ENCODE measurements at regions of chr11 and their contacts with region 1.

Region 1: GRCh38 chr11:65540297-65541092 is 15.6 kb downstream of the SCYL1 start:
- DNase-seq: peak; percentile 90
- H3K4me3 ChIP-seq: peak overlapping the region in 1 of 3 experiments; percentile 38
- H3K27ac ChIP-seq: no peak overlapping the region
- H3K4me1 ChIP-seq: peaks cover 6% of the 10 kb centered on the region
- H3K27me3 ChIP-seq: no peaks in the 10 kb centered on the region
- CTCF ChIP-seq: peak; percentile 85 to 91
- POLR2A ChIP-seq: no peak

Region 2: GRCh38 chr11:65524741-65525545 is 15.6 kb before region 1 on chr11 and contains the start of gene SCYL1:
- CTCF ChIA-PET with region 1: interaction called, 6 read pairs
- POLR2A ChIA-PET with region 1: no interaction called
- dilution Hi-C with region 1: no loop called
- intact Hi-C with region 1: loop called (anchors 1 kb)
- DNase-seq: peak; percentile 66
- H3K4me3 ChIP-seq: peak within 1 kb of the TSS; percentile 39 to 99 (median 54)
- H3K27ac ChIP-seq: peak within 1 kb of the TSS; percentile 60
- H3K4me1 ChIP-seq: peaks cover 11% of the 10 kb centered on the region
- H3K27me3 ChIP-seq: no peaks in the 10 kb centered on the region
- CTCF ChIP-seq: no peak
- POLR2A ChIP-seq: peak; percentile 60
- total RNA-seq, gene SCYL1: 88.2 and 88.7 TPM in 2 replicates

Region 3: GRCh38 chr11:65551572-65552398 is 11.3 kb after region 1 on chr11:
- CTCF ChIA-PET with region 1: interaction called, 21 read pairs
- POLR2A ChIA-PET with region 1: interaction called, 3 read pairs
- dilution Hi-C with region 1: no loop called
- intact Hi-C with region 1: no loop called
- DNase-seq: peak; percentile 44
- H3K4me3 ChIP-seq: no peak overlapping the region
- H3K27ac ChIP-seq: no peak overlapping the region
- H3K4me1 ChIP-seq: peaks cover 20% of the 10 kb centered on the region
- H3K27me3 ChIP-seq: no peaks in the 10 kb centered on the region
- CTCF ChIP-seq: peak; percentile 55 to 57
- POLR2A ChIP-seq: no peak

Region 4: DNA sequence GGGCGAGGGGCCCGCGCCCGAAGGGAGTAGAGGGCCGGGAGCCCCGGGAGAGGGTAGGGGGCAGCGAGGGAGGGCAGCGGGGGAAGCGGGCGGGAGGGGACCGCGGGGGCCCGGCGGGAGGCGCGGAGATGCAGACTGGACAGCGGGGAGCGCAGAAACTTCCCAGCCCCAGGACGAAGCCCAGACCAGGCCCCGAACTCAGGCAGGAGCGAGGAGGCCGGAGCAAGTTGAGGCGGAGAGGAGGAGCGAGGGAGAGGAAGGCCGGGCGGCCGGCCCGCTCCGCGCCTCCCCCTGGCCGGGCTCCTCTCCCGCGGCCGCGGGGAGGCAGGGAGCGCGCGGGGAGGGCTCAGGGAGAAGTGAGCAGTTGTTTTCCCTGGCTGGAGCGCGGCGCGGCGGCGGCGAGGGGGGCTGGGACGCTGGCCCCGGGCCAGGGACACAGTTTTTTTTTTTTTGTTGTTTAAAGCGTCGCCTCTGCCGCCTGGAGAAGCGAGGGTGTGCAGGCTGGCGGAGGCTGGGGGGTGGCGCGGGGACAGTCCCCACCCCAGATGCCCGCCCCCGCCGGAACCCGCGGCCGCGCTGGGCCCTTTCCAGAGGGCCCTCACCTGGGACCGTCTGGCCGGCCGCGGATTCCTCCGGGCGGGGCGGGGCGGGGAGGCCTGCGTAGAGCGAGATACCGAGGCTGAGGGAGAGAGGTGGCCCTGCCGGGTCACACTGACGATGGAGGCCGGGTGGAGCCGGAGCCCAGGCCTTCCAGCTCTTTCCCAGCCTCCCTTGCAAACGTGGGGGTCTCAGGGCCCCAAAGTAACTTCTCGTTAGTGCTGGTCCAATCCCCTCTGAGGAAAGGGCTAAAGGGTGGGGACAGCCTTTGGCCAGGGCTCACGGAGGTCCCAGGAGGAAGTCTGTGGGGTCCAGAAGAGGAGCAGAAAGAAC is 17.8 kb after region 1 on chr11 and contains the start of gene LTBP3:
- CTCF ChIA-PET with region 1: interaction called, 54 read pairs
- POLR2A ChIA-PET with region 1: interaction called, 3 read pairs
- dilution Hi-C with region 1: no loop called
- intact Hi-C with region 1: loop called (anchors 1 kb)
- DNase-seq: peak; percentile 84
- H3K4me3 ChIP-seq: peak within 1 kb of the TSS; percentile 25 to 52 (median 48)
- H3K27ac ChIP-seq: peak within 1 kb of the TSS; percentile 78
- H3K4me1 ChIP-seq: peaks cover 60% of the 10 kb centered on the region
- H3K27me3 ChIP-seq: no peaks in the 10 kb centered on the region
- CTCF ChIP-seq: no peak
- POLR2A ChIP-seq: peak; percentile 62
- total RNA-seq, gene LTBP3: 120 and 121 TPM in 2 replicates

Region 5: DNA sequence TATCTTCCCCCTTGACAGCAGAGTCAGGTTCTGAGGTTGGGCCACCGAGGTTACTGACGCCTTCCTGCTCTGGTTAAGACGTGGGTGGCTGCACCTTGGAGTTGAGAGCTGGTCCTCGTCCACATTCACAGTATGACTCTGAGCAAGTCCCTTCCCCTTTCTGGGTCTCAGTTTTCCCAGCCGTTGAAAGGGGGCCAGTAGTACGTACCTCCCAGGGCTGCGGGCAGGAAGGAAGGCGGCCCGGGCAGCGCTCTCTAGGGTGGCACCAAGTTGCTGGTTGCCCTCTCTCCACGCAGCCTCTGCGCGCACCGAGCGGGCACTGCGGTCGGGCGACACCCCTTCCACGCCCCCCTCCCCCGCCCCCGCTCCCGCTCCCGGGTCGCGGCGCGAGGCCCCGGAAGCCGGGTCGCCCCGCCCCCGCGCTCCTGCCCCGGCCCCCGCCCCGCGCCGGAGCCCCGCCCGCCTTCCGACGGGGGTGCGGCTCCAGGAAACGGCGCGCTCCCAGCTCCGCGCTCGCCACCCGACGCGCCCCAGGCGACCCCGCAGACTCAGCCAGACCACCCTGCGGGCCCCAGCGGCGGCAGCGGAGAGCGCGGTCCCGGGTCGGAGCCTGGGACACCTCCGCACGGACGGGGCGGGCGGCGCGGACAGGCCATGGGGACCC is 35.2 kb after region 1 on chr11 and contains the start of gene EHBP1L1:
- CTCF ChIA-PET with region 1: interaction called, 146 read pairs
- POLR2A ChIA-PET with region 1: no interaction called
- dilution Hi-C with region 1: no loop called
- intact Hi-C with region 1: loop called (anchors 1 kb)
- DNase-seq: peak; percentile 32
- H3K4me3 ChIP-seq: peak within 1 kb of the TSS; percentile 16 to 34 (median 31)
- H3K27ac ChIP-seq: peak within 1 kb of the TSS; percentile 45
- H3K4me1 ChIP-seq: peaks cover 50% of the 10 kb centered on the region
- H3K27me3 ChIP-seq: no peaks in the 10 kb centered on the region
- CTCF ChIP-seq: no peak
- POLR2A ChIP-seq: no peak
- total RNA-seq, gene EHBP1L1: 18.8 and 19.7 TPM in 2 replicates

Region 6: DNA sequence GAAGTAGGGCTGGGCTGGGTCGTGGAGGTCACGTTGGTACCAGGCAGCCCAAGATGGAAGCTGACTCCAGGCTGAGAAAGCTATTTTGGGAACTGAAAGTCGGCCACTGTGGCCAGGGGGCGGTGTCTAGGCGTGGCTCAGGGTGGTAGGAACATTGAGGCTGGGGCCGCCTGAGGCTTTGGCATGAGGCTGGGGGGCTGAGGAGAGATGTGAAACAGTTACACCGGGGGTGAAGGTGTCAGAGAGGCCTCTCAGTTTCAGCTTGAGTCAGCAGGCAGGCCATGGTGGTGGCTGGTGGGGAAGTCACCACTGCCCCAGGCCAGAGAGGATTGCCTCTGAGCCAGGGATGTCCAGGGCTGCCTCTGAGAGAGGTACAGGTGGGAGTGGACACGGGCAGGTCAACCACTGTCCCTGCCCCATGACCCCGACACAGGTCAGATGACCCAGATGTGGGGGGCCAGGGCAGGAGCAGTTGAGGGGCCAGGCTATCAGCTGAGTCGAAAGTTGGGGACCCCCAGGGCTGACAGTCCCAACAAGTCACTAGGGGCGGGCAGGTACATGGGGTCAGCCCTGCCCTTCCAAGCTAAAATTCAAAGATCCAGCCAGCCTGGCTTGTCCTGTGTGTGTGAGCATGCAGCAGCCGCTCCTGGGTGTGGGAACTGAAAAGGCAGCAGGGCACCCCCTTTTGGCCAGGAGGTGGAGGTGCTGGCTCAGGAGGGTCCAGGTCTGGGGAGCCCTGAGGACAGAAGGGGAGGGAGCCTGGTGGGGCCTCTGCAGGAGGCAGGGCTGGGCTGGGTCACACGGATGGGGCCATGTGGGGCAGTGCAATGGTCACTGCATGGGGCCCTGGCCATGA is 47.9 kb after region 1 on chr11:
- CTCF ChIA-PET with region 1: interaction called, 206 read pairs
- POLR2A ChIA-PET with region 1: interaction called, 3 read pairs
- dilution Hi-C with region 1: no loop called
- intact Hi-C with region 1: loop called (anchors 1 kb)
- DNase-seq: peak; percentile 54
- H3K4me3 ChIP-seq: no peak overlapping the region
- H3K27ac ChIP-seq: no peak overlapping the region
- H3K4me1 ChIP-seq: peaks cover 7% of the 10 kb centered on the region
- H3K27me3 ChIP-seq: no peaks in the 10 kb centered on the region
- CTCF ChIP-seq: peak; percentile 63 to 73
- POLR2A ChIP-seq: no peak

Region 7: GRCh38 chr11:65615229-65615941 is 74.9 kb after region 1 on chr11 and contains the start of gene PCNX3:
- CTCF ChIA-PET with region 1: interaction called, 13 read pairs
- POLR2A ChIA-PET with region 1: no interaction called
- dilution Hi-C with region 1: no loop called
- intact Hi-C with region 1: no loop called
- DNase-seq: peak; percentile 100
- H3K4me3 ChIP-seq: peak within 1 kb of the TSS; percentile 81 to 90 (median 87)
- H3K27ac ChIP-seq: peak within 1 kb of the TSS; percentile 88
- H3K4me1 ChIP-seq: peaks cover 39% of the 10 kb centered on the region
- H3K27me3 ChIP-seq: no peaks in the 10 kb centered on the region
- CTCF ChIP-seq: no peak
- POLR2A ChIP-seq: peak; percentile 59
- total RNA-seq, gene PCNX3: 53.8 and 53.9 TPM in 2 replicates

Measured in endothelial cell of umbilical vein (primary cell).